ENCODE measurements at regions of chr18 and their contacts with region 1.

Region 1: DNA sequence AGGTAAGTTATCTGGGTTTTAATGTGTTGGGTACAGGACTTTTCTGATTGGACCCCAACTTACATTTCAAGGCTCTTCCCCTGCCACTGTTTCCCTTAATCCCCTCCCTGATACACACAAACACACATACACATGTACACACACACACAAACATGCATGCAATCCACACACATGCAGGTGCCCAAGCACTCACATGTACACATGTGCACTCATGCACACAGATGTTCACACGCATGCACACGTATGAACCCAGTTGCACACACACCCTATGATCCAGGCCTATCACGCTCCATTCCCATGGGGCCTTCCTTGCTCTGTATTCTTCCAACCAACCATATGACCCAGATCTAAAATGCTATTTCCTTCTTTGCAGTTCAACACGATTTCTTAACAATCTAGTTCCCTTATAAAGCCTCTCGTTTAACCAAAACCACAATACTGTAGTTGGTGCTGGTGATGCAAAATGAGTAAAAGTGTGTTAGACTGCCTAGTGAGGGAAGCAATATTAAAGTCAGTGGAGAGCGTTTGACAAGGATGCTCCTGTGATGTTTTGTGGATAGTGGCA is 11.1 kb downstream of the SERPINB8 start:
- DNase-seq: no peak
- ATAC-seq: no peak
- H3K4me3 ChIP-seq: no peak overlapping the region
- H3K27ac ChIP-seq: no peak overlapping the region
- H3K4me1 ChIP-seq: no peaks in the 10 kb centered on the region
- H3K27me3 ChIP-seq: no peaks in the 10 kb centered on the region
- CTCF ChIP-seq: no peak

Region 2: GRCh38 chr18:63823518-63824219 is 157.3 kb before region 1 on chr18:
- intact Hi-C with region 1: loop called in 1 of 2 experiments (anchors 10 kb)
- DNase-seq: peak in 1 of 2 donors; percentile 20
- ATAC-seq: no peak
- H3K4me3 ChIP-seq: no peak overlapping the region
- H3K27ac ChIP-seq: no peak overlapping the region
- H3K4me1 ChIP-seq: no peaks in the 10 kb centered on the region
- H3K27me3 ChIP-seq: peaks cover 0 to 2% (median 0%) of the 10 kb centered on the region in 3 donors
- CTCF ChIP-seq: no peak

Measured in psoas muscle (tissue), 8 donors.